ENCODE measurements at regions of chr19 and their contacts with region 1.

Region 1: DNA sequence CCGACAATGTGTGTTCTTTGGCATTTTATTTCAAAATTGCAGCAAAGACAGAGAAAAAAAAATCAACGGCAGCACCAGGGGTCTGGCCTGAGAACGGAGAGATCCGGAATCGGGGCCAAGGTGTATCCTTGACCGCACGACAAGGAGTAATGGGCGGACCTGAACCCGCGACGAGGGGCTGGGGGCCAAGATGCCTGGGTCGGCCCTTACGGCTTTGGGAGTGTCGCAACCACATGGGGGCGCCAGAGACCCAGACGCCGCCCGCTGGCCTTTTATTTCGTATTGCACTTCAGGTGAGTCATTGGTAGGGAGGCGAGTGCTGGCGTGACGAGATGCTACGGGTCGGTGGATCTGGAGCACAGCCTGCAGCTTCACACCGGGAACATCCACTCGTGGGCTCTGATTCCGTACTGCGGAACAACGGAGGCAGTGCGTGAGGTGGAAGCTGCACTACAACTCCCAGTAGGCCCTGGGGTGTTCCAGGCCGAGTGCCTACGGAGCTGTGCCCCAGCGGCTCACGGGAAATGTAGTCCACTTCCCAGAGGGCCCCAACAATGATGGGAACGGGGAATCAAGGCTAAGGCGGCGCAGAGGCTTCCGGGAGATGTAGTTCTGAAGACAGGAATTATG is 15.7 kb downstream of the BCAT2 start:
- DNase-seq: peak; percentile 65 to 91 (median 76)
- ATAC-seq: peak; percentile 98 to 99 (median 98)
- H3K4me3 ChIP-seq: peak overlapping the region; percentile 56 to 87
- H3K4me3 Mint-ChIP-seq: peak overlapping the region; percentile 79 to 90 (median 86)
- H3K27ac ChIP-seq: peak overlapping the region; percentile 66
- H3K27ac Mint-ChIP-seq: peak overlapping the region; percentile 91 to 94
- H3K4me1 ChIP-seq: peaks cover 0 to 14% of the 10 kb centered on the region in 2 experiments
- H3K4me1 Mint-ChIP-seq: peaks cover 5 to 12% (median 9%) of the 10 kb centered on the region in 3 donors
- H3K27me3 ChIP-seq: no peaks in the 10 kb centered on the region
- H3K27me3 Mint-ChIP-seq: no peaks in the 10 kb centered on the region

Region 2: GRCh38 chr19:48713864-48714758 is 81.1 kb before region 1 on chr19:
- CTCF ChIA-PET with region 1: no interaction called
- POLR2A ChIA-PET with region 1: no interaction called
- DNase-seq: peak; percentile 90 to 98 (median 95)
- ATAC-seq: peak; percentile 92 to 95 (median 94)
- H3K4me3 ChIP-seq: peak overlapping the region; percentile 60 to 74
- H3K4me3 Mint-ChIP-seq: peak overlapping the region; percentile 84 to 86 (median 85)
- H3K27ac ChIP-seq: peak overlapping the region; percentile 69
- H3K27ac Mint-ChIP-seq: peak overlapping the region; percentile 79 to 80
- H3K4me1 ChIP-seq: peaks cover 2 to 21% of the 10 kb centered on the region in 2 experiments
- H3K4me1 Mint-ChIP-seq: peaks cover 16 to 21% (median 17%) of the 10 kb centered on the region in 3 donors
- H3K27me3 ChIP-seq: no peaks in the 10 kb centered on the region
- H3K27me3 Mint-ChIP-seq: no peaks in the 10 kb centered on the region

Region 3: DNA sequence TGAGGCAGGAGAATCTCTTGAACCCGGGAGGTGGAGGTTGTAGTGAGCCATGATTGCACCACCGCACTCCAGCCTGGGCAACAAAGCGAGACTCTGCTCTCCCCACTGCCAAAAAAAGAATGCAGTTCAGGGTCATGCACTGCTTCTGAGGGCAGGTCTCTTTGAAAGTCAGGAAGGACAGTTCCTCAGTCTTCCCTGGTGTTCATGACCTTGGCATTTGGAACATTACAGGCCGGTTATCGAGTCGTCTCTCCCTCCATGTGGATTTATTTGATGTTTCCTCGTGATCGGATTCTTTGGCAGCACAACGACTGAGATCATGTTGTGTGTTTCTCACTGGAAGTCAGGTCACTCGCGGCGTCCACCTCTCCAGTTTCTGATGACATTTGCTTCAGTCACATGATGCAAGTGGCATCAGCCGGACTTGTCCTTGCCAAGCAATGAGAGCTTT is 22.6 kb before region 1 on chr19:
- CTCF ChIA-PET with region 1: no interaction called
- POLR2A ChIA-PET with region 1: no interaction called
- DNase-seq: no peak
- ATAC-seq: no peak
- H3K4me3 ChIP-seq: no peak overlapping the region
- H3K4me3 Mint-ChIP-seq: no peak overlapping the region
- H3K27ac ChIP-seq: no peak overlapping the region
- H3K27ac Mint-ChIP-seq: no peak overlapping the region
- H3K4me1 ChIP-seq: no peaks in the 10 kb centered on the region
- H3K4me1 Mint-ChIP-seq: no peaks in the 10 kb centered on the region
- H3K27me3 ChIP-seq: peaks cover 2 to 34% of the 10 kb centered on the region in 2 experiments
- H3K27me3 Mint-ChIP-seq: peaks cover 12 to 21% of the 10 kb centered on the region in 2 donors

Region 4: GRCh38 chr19:48835734-48836088 is 40.5 kb after region 1 on chr19:
- CTCF ChIA-PET with region 1: interaction called, 3 to 17 read pairs
- POLR2A ChIA-PET with region 1: interaction called in 1 of 2 experiments, 3 read pairs
- DNase-seq: peak; percentile 76 to 96 (median 91)
- ATAC-seq: peak; percentile 83 to 93 (median 90)
- H3K4me3 ChIP-seq: peak overlapping the region; percentile 13 to 46
- H3K4me3 Mint-ChIP-seq: peak overlapping the region; percentile 78 to 92 (median 79)
- H3K27ac ChIP-seq: no peak overlapping the region
- H3K27ac Mint-ChIP-seq: peak overlapping the region; percentile 46 to 80
- H3K4me1 ChIP-seq: peaks cover 3 to 28% of the 10 kb centered on the region in 2 experiments
- H3K4me1 Mint-ChIP-seq: peaks cover 18 to 25% (median 19%) of the 10 kb centered on the region in 3 donors
- H3K27me3 ChIP-seq: peaks cover 0 to 33% of the 10 kb centered on the region in 2 experiments
- H3K27me3 Mint-ChIP-seq: peaks cover 3 to 11% of the 10 kb centered on the region in 2 donors

Region 5: GRCh38 chr19:48842789-48843162 is 47.6 kb after region 1 on chr19:
- CTCF ChIA-PET with region 1: interaction called, 7 to 43 read pairs
- POLR2A ChIA-PET with region 1: no interaction called
- DNase-seq: peak in 30 of 35 experiments; percentile 6 to 81 (median 37)
- ATAC-seq: peak in 3 of 4 experiments; percentile 46 to 63 (median 62)
- H3K4me3 ChIP-seq: no peak overlapping the region
- H3K4me3 Mint-ChIP-seq: no peak overlapping the region
- H3K27ac ChIP-seq: no peak overlapping the region
- H3K27ac Mint-ChIP-seq: peak overlapping the region in 1 of 2 donors; percentile 79
- H3K4me1 ChIP-seq: peaks cover 0 to under 1% of the 10 kb centered on the region in 2 experiments
- H3K4me1 Mint-ChIP-seq: peaks cover 0 to 3% (median under 1%) of the 10 kb centered on the region in 3 donors
- H3K27me3 ChIP-seq: peaks cover 0 to 2% of the 10 kb centered on the region in 2 experiments
- H3K27me3 Mint-ChIP-seq: no peaks in the 10 kb centered on the region